Activated CD4-positive, alpha-beta memory T cell treated with anti-CD3 and anti-CD28 coated beads for 36 hours (primary cell): ENCODE measurements at regions of chr2 and their contacts with region 1.

Region 1: DNA sequence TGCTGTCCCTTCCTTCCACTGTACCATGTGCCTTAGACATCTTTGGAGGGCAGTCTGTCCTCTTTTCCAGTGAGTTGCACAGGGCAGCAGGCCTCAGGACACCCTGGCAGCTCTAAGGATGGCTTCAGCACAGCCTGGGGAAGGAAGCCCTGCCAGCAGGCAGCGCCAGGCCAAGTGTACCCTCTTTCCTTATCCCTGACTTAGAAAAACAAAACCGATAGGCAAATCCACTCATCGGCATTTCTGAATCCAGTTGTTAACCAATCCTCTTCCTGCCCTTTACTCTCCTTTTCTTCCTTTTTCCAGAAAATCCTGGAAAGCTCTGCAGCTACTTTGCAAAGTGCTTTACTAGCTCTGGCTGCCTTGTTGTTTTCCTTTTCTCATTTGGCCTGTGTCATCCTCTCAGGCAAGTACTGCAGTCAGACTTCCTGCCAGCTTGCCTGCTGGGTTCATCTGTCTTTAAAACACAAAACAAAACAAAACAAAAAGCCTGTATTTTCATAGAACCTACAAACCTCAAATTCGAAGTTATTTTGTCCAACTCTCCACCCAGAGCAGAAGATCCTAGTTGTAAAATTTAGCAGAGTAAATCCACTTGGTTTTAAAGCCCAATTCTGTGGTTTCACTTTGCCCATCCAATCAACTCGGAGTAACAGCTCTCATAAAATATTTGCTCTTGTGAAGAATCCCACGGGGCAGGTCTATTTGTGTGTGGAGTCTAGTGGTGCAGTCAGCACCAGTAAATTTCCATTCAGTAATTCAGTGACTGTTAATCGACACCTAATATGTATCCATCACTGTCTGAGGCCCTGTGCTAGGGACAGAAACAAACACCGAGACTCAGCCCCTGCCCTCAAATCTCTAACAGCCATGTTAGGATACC is 45.2 kb downstream of the PCBP1 start:
- DNase-seq: peak; percentile 53
- H3K4me3 Mint-ChIP-seq: peak overlapping the region; percentile 94
- H3K27ac Mint-ChIP-seq: peak overlapping the region; percentile 100
- H3K4me1 Mint-ChIP-seq: peaks cover 75% of the 10 kb centered on the region
- H3K27me3 Mint-ChIP-seq: no peaks in the 10 kb centered on the region

Region 2: DNA sequence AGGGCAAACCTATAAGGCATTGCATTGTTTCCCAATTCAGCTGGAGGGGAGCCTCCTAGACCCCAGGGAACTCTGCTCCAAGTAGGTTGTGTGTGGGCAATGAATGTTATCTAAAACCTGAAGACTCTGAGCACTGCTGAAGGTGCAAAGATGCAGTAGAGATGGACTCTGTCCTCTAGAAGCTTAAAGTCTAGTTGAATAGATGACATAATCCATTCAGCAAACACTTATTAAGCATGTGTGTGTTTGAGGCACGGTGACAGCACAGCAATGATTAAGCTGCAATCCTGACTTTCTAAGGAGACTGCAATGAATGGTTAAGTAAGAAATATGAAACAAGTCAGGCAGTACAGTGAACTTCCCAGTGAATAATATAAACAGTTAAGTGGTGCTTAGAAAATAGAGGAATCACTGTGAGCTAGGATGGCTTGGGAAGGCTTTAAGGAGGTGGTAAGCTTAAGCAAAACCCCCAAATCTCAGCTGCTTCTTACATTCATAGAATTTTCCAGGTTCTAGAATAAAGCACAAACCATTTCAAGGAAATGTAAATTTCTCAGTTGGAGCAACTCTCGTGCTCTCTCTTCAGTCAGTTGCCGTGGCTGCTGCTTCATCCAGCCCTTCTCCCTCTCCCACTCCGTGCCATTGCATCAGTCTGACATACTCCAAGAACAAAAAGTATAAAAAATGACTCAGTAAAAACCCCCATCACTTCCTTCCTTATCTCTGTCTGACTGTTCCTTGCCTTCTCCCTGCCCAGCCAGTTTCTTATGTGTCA is 198.5 kb before region 1 on chr2:
- CTCF ChIA-PET with region 1: no interaction called
- POLR2A ChIA-PET with region 1: interaction called, 10 read pairs
- intact Hi-C with region 1: no loop called
- DNase-seq: peak; percentile 63
- H3K4me3 Mint-ChIP-seq: no peak overlapping the region
- H3K27ac Mint-ChIP-seq: peak overlapping the region; percentile 73
- H3K4me1 Mint-ChIP-seq: peaks cover 37% of the 10 kb centered on the region
- H3K27me3 Mint-ChIP-seq: no peaks in the 10 kb centered on the region

Region 3: DNA sequence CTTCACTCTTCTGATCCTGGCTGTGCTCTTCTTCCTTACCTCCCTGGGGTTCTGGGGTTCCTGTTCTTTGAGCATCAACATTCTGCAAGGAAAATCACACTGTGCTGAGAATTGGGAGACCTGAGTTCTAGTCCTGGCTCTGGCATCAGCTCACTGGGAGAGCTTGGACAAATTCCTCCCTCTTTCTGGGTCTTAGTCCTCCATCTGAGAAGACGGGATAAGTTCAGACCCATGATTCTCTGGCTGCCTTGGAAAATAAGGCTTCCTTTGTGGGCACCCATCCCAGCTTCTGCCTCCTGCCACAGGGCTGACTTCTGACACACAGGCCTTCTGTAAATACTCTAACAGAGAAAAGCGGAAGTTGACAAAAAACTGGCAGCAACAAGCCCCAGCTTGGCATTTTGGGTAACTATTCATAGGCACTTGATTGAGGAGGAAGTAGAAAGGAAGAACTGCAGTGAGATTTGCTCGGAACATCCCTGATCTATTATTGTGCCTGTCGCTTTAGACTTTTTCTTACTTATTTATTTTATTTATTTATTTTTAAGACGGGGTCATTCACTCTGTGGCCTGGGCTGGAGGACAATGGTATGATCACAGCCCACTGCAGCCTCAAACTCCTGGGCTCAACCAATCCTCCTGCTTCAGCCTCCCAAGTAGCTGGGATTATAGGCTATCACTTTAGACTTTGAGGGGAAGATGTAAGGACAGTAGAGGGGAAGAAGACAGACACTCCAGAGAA is 37.3 kb before region 1 on chr2:
- CTCF ChIA-PET with region 1: interaction called, 8 read pairs
- POLR2A ChIA-PET with region 1: interaction called, 135 read pairs
- intact Hi-C with region 1: no loop called
- DNase-seq: peak; percentile 69
- H3K4me3 Mint-ChIP-seq: peak overlapping the region; percentile 64
- H3K27ac Mint-ChIP-seq: peak overlapping the region; percentile 91
- H3K4me1 Mint-ChIP-seq: peaks cover 53% of the 10 kb centered on the region
- H3K27me3 Mint-ChIP-seq: no peaks in the 10 kb centered on the region

Region 4: GRCh38 chr2:70104231-70105111 is 28.0 kb before region 1 on chr2:
- CTCF ChIA-PET with region 1: interaction called, 5 read pairs
- POLR2A ChIA-PET with region 1: interaction called, 14 read pairs
- intact Hi-C with region 1: loop called (anchors 1 kb)
- DNase-seq: peak; percentile 71
- H3K4me3 Mint-ChIP-seq: peak overlapping the region; percentile 70
- H3K27ac Mint-ChIP-seq: peak overlapping the region; percentile 95
- H3K4me1 Mint-ChIP-seq: peaks cover 52% of the 10 kb centered on the region
- H3K27me3 Mint-ChIP-seq: no peaks in the 10 kb centered on the region

Region 5: DNA sequence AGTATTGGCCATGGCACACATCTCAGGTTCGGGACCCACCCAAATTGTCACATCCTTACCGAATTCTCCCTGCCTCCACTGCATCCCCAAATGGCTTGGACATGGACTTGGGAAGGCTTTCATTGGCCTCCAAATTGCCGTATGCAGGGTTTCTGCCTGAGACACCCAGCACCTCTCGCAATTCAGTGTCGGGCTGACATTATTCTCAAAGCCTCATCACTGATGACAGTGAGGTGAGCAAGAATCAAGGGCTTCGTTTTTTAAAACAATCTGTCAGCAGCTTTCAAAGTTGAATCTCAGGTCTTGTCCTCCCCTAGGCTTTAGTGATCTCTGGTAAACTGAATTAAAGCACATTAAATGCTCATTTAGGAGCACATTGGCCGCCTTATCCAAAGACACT is 450.6 kb after region 1 on chr2:
- CTCF ChIA-PET with region 1: no interaction called
- POLR2A ChIA-PET with region 1: no interaction called
- intact Hi-C with region 1: no loop called
- DNase-seq: no peak
- H3K4me3 Mint-ChIP-seq: no peak overlapping the region
- H3K27ac Mint-ChIP-seq: no peak overlapping the region
- H3K4me1 Mint-ChIP-seq: no peaks in the 10 kb centered on the region
- H3K27me3 Mint-ChIP-seq: peaks cover 2% of the 10 kb centered on the region